Left cardiac atrium (tissue), 4 donors: ENCODE measurements at regions of chr16 and their contacts with region 1.

Region 1: GRCh38 chr16:13919683-13920509 is at the start of gene ERCC4:
- DNase-seq: peak; percentile 100
- ATAC-seq: peak; percentile 98 to 99
- total RNA-seq, gene ERCC4: 6.8 to 10.1 TPM

Region 2: GRCh38 chr16:14013571-14014282 is 93.8 kb after region 1 on chr16:
- intact Hi-C with region 1: loop called in 1 of 2 experiments (anchors 10 kb)
- DNase-seq: no peak
- ATAC-seq: peak; percentile 70 to 73

Region 3: GRCh38 chr16:14193316-14193871 is 273.5 kb after region 1 on chr16:
- intact Hi-C with region 1: loop called (anchors 5 to 10 kb)
- DNase-seq: no peak
- ATAC-seq: no peak

Region 4: DNA sequence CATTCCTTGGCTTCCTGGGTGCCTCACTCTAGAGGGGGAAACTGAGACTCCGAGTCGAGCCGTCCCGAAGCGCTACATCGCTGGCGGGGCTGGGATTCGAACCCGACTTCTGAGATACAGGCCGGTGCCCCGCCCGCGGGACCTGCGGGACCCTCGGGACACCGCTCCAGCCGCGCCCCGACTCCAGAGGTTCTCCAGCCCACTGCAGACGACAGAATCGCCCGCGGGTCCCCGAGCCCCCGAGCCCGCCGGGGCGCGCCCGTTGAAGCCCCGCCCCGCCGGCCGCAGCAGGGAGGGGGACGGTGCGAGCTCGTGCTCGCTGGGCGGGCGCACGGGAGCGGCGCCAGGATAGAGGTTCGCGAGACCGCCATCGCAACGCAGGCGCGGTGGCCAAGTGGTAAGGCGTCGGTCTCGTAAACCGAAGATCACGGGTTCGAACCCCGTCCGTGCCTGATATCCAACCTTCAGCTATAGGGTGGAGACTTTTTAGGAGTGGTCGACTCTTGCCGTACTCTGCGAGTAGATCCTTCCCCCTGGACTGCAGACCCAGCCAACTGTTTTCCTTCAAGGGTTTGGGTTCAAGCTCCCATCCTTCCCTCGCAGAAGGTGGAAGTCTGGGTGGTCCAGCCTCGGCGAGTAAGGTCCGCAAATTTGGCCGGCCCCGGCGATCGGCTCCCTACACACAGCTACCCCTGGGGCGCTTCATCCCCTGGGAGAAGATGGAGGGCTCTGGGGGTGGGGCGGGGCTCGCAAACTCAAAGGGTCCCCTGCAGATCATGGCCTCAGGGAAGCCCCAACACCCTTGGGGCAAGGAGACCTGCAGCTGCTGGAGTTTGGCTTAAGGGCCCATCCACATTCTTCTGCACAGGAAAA is 365.9 kb after region 1 on chr16:
- intact Hi-C with region 1: loop called in 1 of 2 experiments (anchors 5 kb)
- DNase-seq: peak; percentile 93
- ATAC-seq: peak; percentile 94 to 95